B cell (primary cell): ENCODE measurements at regions of chr11 and their contacts with region 1.

Region 1: DNA sequence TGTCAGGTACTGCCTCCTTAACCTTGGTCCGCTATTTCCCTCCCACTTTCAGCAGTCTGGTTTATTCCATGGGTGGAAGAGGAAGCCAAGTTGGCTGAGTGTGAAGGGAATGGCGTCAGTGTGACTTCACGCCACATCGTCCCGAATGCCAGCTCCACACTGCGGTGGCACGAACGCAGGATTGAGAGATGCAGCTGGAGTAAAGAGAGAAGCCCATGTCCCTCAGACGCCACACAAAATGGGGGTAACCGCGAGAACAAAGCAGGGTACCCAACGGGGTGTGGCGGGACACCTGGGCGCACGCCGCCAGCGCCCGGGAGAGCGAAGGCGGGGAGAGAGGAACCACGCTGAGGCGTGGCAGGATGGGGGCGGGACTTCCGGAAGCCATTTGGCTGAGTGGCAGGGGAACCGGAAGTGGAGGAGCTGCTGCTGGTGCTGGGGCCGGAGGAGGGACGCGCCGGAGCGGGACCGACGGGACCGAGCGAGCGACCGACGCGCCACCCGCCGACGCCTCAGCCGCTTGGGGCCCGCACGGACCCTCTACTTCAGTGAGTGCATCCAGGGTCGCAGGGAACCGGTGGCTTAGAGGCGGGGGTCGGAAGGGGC is at the start of gene PAFAH1B2:
- DNase-seq: peak; percentile 98
- ATAC-seq: peak; percentile 85
- H3K4me3 ChIP-seq: peak within 1 kb of the TSS; percentile 78 to 88 (median 82)
- H3K4me3 Mint-ChIP-seq: peak within 1 kb of the TSS; percentile 95
- H3K27ac ChIP-seq: peak within 1 kb of the TSS; percentile 80 to 87
- H3K27ac Mint-ChIP-seq: peak within 1 kb of the TSS; percentile 98
- H3K4me1 ChIP-seq: peaks cover 20 to 25% of the 10 kb centered on the region in 2 donors
- H3K4me1 Mint-ChIP-seq: peaks cover 36% of the 10 kb centered on the region
- H3K27me3 ChIP-seq: no peaks in the 10 kb centered on the region
- H3K27me3 Mint-ChIP-seq: peaks cover 8% of the 10 kb centered on the region
- CTCF ChIP-seq: no peak
- total RNA-seq, gene PAFAH1B2: 98.1 and 103 TPM in 2 replicates

Region 2: DNA sequence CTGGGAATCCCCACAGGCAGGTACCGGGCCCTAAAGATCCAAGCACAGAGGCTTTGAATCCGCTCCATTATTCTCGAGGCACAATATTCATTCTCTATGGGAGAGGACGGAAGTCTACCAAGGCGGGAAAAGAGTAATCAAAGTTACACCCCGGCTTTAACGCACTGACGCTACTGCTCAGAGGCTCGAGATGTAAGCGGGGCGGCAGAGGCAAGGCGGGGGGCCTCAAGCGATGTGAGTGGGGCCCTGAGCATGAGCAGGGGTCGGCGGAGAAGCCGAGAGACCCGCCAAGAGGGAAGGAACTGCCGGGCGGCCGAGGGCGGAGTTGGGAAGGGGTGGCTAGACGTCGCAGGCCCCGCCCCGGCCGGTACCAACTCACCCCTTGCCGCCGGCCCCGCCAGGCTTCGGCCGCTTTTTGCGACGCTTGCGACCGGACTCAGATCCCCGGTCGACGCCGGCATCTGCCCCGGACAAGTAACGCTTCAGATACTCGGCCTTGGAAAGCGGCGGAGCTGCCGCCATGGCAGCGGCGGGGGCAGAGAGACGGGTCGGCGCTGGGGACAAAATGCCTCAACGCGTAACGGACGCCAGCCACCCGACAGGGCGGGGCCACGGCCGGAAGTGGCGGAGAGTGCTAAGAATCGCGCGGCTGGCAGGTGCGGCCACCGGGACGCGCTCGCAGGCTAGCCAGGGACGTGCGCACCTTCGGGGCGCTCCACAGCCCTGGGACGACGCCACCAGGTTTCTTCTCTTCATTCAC is 371.4 kb before region 1 on chr11 and contains the start of gene BUD13:
- CTCF ChIA-PET with region 1: interaction called, 3 read pairs
- POLR2A ChIA-PET with region 1: interaction called, 3 read pairs
- intact Hi-C with region 1: loop called (anchors 1 kb)
- DNase-seq: peak; percentile 96
- ATAC-seq: peak; percentile 89
- H3K4me3 ChIP-seq: peak within 1 kb of the TSS; percentile 71 to 99 (median 95)
- H3K4me3 Mint-ChIP-seq: peak within 1 kb of the TSS; percentile 93
- H3K27ac ChIP-seq: peak within 1 kb of the TSS; percentile 85 to 96
- H3K27ac Mint-ChIP-seq: peak within 1 kb of the TSS; percentile 93
- H3K4me1 ChIP-seq: peaks cover 23 to 28% of the 10 kb centered on the region in 2 donors
- H3K4me1 Mint-ChIP-seq: peaks cover 34% of the 10 kb centered on the region
- H3K27me3 ChIP-seq: no peaks in the 10 kb centered on the region
- H3K27me3 Mint-ChIP-seq: no peaks in the 10 kb centered on the region
- CTCF ChIP-seq: no peak
- total RNA-seq, gene BUD13: 24.2 and 24.8 TPM in 2 replicates

Region 3: GRCh38 chr11:117178210-117179034 is 34.4 kb after region 1 on chr11 and contains the start of gene SIDT2:
- CTCF ChIA-PET with region 1: interaction called, 38 read pairs
- POLR2A ChIA-PET with region 1: interaction called, 34 read pairs
- intact Hi-C with region 1: loop called (anchors 1 kb)
- DNase-seq: peak; percentile 92
- ATAC-seq: peak; percentile 88
- H3K4me3 ChIP-seq: peak within 1 kb of the TSS; percentile 68 to 85 (median 81)
- H3K4me3 Mint-ChIP-seq: peak within 1 kb of the TSS; percentile 99
- H3K27ac ChIP-seq: peak within 1 kb of the TSS; percentile 84
- H3K27ac Mint-ChIP-seq: peak within 1 kb of the TSS; percentile 96
- H3K4me1 ChIP-seq: peaks cover 27 to 39% of the 10 kb centered on the region in 2 donors
- H3K4me1 Mint-ChIP-seq: peaks cover 36% of the 10 kb centered on the region
- H3K27me3 ChIP-seq: no peaks in the 10 kb centered on the region
- H3K27me3 Mint-ChIP-seq: no peaks in the 10 kb centered on the region
- CTCF ChIP-seq: no peak
- total RNA-seq, gene SIDT2: 241 and 245 TPM in 2 replicates

Region 4: GRCh38 chr11:117189191-117189930 is 45.4 kb after region 1 on chr11:
- CTCF ChIA-PET with region 1: no interaction called
- POLR2A ChIA-PET with region 1: interaction called, 8 read pairs
- intact Hi-C with region 1: loop called (anchors 1 kb)
- DNase-seq: peak; percentile 95
- ATAC-seq: peak; percentile 86
- H3K4me3 ChIP-seq: peak overlapping the region in 4 of 5 experiments; percentile 15 to 53 (median 32)
- H3K4me3 Mint-ChIP-seq: peak overlapping the region; percentile 80
- H3K27ac ChIP-seq: peak overlapping the region; percentile 90 to 91
- H3K27ac Mint-ChIP-seq: peak overlapping the region; percentile 98
- H3K4me1 ChIP-seq: peaks cover 56 to 77% of the 10 kb centered on the region in 2 donors
- H3K4me1 Mint-ChIP-seq: peaks cover 68% of the 10 kb centered on the region
- H3K27me3 ChIP-seq: no peaks in the 10 kb centered on the region
- H3K27me3 Mint-ChIP-seq: no peaks in the 10 kb centered on the region
- CTCF ChIP-seq: no peak

Region 5: GRCh38 chr11:117232092-117232878 is 88.3 kb after region 1 on chr11 and contains the start of gene RNF214:
- CTCF ChIA-PET with region 1: interaction called, 14 read pairs
- POLR2A ChIA-PET with region 1: interaction called, 5 read pairs
- intact Hi-C with region 1: loop called (anchors 1 kb)
- DNase-seq: peak; percentile 89
- ATAC-seq: peak; percentile 78
- H3K4me3 ChIP-seq: peak within 1 kb of the TSS; percentile 64 to 99 (median 91)
- H3K4me3 Mint-ChIP-seq: peak within 1 kb of the TSS; percentile 95
- H3K27ac ChIP-seq: peak within 1 kb of the TSS; percentile 82 to 84
- H3K27ac Mint-ChIP-seq: peak within 1 kb of the TSS; percentile 99
- H3K4me1 ChIP-seq: peaks cover 34 to 38% of the 10 kb centered on the region in 2 donors
- H3K4me1 Mint-ChIP-seq: peaks cover 48% of the 10 kb centered on the region
- H3K27me3 ChIP-seq: no peaks in the 10 kb centered on the region
- H3K27me3 Mint-ChIP-seq: no peaks in the 10 kb centered on the region
- CTCF ChIP-seq: peak; percentile 83
- total RNA-seq, gene RNF214: 33.6 and 36.1 TPM in 2 replicates

Region 6: GRCh38 chr11:117327567-117328374 is 183.8 kb after region 1 on chr11 and contains the start of gene CEP164:
- CTCF ChIA-PET with region 1: no interaction called
- POLR2A ChIA-PET with region 1: interaction called, 6 read pairs
- intact Hi-C with region 1: loop called (anchors 10 kb)
- DNase-seq: peak; percentile 97
- ATAC-seq: peak; percentile 92
- H3K4me3 ChIP-seq: peak within 1 kb of the TSS; percentile 57 to 88 (median 79)
- H3K4me3 Mint-ChIP-seq: peak within 1 kb of the TSS; percentile 71
- H3K27ac ChIP-seq: peak within 1 kb of the TSS; percentile 84 to 89
- H3K27ac Mint-ChIP-seq: peak within 1 kb of the TSS; percentile 65
- H3K4me1 ChIP-seq: peaks cover 6 to 11% of the 10 kb centered on the region in 2 donors
- H3K4me1 Mint-ChIP-seq: peaks cover 8% of the 10 kb centered on the region
- H3K27me3 ChIP-seq: no peaks in the 10 kb centered on the region
- H3K27me3 Mint-ChIP-seq: no peaks in the 10 kb centered on the region
- CTCF ChIP-seq: no peak
- total RNA-seq, gene CEP164: 48.7 and 54.8 TPM in 2 replicates